Activated T-helper 1 cell treated with anti-CD3 and anti-CD28 coated beads, Interleukin-12 subunit alpha, Interleukin-12 subunit beta, Interleukin-2, Interleukin-4 antibody, amounts not matched to agents 30 ng/mL and 10 ng/mL and 1 ng/mL, durations not matched to agents 14 hours and 24 hours and 36 hours (primary cell): ENCODE measurements at regions of chr1 and their contacts with region 1.

Region 1: GRCh38 chr1:212566522-212567479 is 41.8 kb upstream of the ATF3 start:
- DNase-seq: peak; percentile 57
- H3K4me3 Mint-ChIP-seq: peak overlapping the region; percentile 85
- H3K27ac Mint-ChIP-seq: peak overlapping the region; percentile 94
- H3K4me1 Mint-ChIP-seq: peaks cover 32% of the 10 kb centered on the region
- H3K27me3 Mint-ChIP-seq: peaks cover 20% of the 10 kb centered on the region

Region 2: DNA sequence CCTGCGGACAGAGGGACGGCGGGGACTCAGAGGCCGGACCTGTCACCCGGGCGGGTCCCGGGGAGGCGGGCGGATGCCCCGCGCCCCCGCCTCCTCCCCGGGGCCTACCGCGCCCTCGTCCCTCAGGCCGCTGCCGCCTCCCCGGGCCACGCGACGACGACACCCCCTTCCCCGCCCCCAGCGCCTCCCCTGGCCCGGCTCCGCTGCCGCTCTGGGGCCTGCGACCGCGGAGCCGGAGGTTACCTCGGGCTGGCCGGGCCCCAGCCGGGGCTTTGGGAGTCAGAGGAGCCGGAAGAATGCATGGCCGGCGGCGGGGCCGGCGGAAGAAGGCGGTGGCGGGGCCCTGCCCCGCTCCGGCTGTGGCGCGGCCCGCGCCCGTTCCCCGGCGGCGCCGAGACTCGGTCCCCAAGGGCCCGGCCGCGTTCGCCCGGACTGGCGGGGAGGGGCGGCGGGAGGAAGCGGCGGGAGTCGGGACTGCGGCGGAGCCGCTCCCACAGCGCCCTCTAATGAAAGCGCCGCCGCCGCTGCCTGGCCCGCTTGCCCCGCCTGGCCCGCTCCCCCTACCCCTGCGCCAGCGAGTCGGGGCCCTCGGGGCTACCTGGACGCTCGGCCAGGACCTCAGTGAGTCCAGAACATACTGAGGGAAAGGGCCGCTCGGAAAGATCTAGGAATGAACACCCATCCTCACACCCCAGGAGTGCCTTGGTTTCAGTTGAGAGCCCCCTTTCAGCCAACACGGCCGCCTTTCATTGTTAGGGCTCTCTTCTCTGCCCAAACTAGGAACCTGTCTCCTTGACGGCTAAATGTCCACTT is 736.3 kb before region 1 on chr1 and contains the start of gene LPGAT1:
- intact Hi-C with region 1: loop called (anchors 5 kb)
- DNase-seq: peak; percentile 65
- H3K4me3 Mint-ChIP-seq: peak within 1 kb of the TSS; percentile 91
- H3K27ac Mint-ChIP-seq: peak within 1 kb of the TSS; percentile 90
- H3K4me1 Mint-ChIP-seq: peaks cover 69% of the 10 kb centered on the region
- H3K27me3 Mint-ChIP-seq: peaks cover 2% of the 10 kb centered on the region
- total RNA-seq, gene LPGAT1: 35.3 and 35.6 TPM in 2 replicates

Region 3: GRCh38 chr1:212488397-212489283 is 78.2 kb before region 1 on chr1:
- intact Hi-C with region 1: loop called (anchors 2 kb)
- DNase-seq: peak; percentile 9
- H3K4me3 Mint-ChIP-seq: no peak overlapping the region
- H3K27ac Mint-ChIP-seq: no peak overlapping the region
- H3K4me1 Mint-ChIP-seq: peaks cover 12% of the 10 kb centered on the region
- H3K27me3 Mint-ChIP-seq: peaks cover 7% of the 10 kb centered on the region

Region 4: GRCh38 chr1:212630158-212630900 is 63.5 kb after region 1 on chr1:
- intact Hi-C with region 1: loop called (anchors 2 kb)
- DNase-seq: peak; percentile 48
- H3K4me3 Mint-ChIP-seq: no peak overlapping the region
- H3K27ac Mint-ChIP-seq: no peak overlapping the region
- H3K4me1 Mint-ChIP-seq: peaks cover 11% of the 10 kb centered on the region
- H3K27me3 Mint-ChIP-seq: peaks cover 6% of the 10 kb centered on the region

Region 5: DNA sequence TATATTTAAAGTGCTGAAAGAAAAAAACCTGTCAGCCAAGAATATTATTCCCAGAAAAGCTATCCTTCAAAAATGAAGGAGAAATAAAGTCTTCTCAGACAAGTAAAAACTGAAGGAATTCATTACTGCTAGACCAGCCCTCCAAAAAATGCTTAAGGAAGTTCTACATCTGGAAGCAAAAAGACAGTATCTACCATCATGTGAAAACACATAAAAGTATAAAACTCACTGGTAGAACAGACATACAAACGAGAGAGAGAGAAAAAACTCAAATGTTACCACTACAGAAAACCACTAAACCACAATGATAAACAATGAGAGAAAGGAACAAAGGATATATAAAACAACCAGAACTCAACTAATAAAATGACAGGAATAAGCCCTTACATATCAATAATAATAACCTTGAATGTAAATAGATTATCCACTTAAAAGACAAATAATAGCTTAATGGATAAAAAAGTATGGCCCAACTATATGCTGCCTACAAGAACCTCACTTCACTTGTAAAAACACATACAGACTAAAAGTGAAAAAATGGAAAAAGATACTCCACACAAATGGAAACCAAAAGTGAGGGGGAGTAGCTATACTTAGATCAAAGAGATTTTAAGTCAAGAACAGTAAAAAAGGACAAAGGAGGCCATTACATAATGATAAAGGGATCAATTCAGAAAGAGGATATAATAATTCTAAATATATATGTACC is 202.8 kb after region 1 on chr1:
- intact Hi-C with region 1: loop called (anchors 1 kb)
- DNase-seq: no peak
- H3K4me3 Mint-ChIP-seq: no peak overlapping the region
- H3K27ac Mint-ChIP-seq: peak overlapping the region; percentile 85
- H3K4me1 Mint-ChIP-seq: peaks cover 43% of the 10 kb centered on the region
- H3K27me3 Mint-ChIP-seq: peaks cover 3% of the 10 kb centered on the region

Region 6: GRCh38 chr1:212857992-212858460 is 291.2 kb after region 1 on chr1 and contains the start of gene FLVCR1:
- intact Hi-C with region 1: loop called (anchors 5 kb)
- DNase-seq: peak; percentile 96
- H3K4me3 Mint-ChIP-seq: peak within 1 kb of the TSS; percentile 53
- H3K27ac Mint-ChIP-seq: peak within 1 kb of the TSS; percentile 98
- H3K4me1 Mint-ChIP-seq: peaks cover 15% of the 10 kb centered on the region
- H3K27me3 Mint-ChIP-seq: peaks cover 2% of the 10 kb centered on the region
- total RNA-seq, gene FLVCR1: 18.5 and 18.7 TPM in 2 replicates